Spleen (tissue), 13 donors: ENCODE measurements at regions of chr19 and their contacts with region 1.

Region 1: GRCh38 chr19:5031231-5032100 is 62.6 kb downstream of the KDM4B start:
- DNase-seq: peak; percentile 94
- H3K4me3 ChIP-seq: no peak overlapping the region
- H3K27ac ChIP-seq: peak overlapping the region in 3 of 8 donors; percentile 11 to 48 (median 44)
- H3K4me1 ChIP-seq: peaks cover 8 to 85% (median 48%) of the 10 kb centered on the region in 6 donors
- H3K27me3 ChIP-seq: no peaks in the 10 kb centered on the region
- CTCF ChIP-seq: peak; percentile 88 to 99 (median 96)
- POLR2A ChIP-seq: no peak

Region 2: GRCh38 chr19:4815426-4816201 is 215.9 kb before region 1 on chr19:
- intact Hi-C with region 1: loop called (anchors 5 kb)
- DNase-seq: peak; percentile 91
- H3K4me3 ChIP-seq: peak overlapping the region in 6 of 8 donors; percentile 14 to 58 (median 25)
- H3K27ac ChIP-seq: peak overlapping the region in 5 of 8 donors; percentile 44 to 67 (median 61)
- H3K4me1 ChIP-seq: peaks cover 5 to 52% (median 23%) of the 10 kb centered on the region in 6 donors
- H3K27me3 ChIP-seq: no peaks in the 10 kb centered on the region
- CTCF ChIP-seq: peak in 1 of 11 experiments; percentile 7
- POLR2A ChIP-seq: no peak

Region 3: DNA sequence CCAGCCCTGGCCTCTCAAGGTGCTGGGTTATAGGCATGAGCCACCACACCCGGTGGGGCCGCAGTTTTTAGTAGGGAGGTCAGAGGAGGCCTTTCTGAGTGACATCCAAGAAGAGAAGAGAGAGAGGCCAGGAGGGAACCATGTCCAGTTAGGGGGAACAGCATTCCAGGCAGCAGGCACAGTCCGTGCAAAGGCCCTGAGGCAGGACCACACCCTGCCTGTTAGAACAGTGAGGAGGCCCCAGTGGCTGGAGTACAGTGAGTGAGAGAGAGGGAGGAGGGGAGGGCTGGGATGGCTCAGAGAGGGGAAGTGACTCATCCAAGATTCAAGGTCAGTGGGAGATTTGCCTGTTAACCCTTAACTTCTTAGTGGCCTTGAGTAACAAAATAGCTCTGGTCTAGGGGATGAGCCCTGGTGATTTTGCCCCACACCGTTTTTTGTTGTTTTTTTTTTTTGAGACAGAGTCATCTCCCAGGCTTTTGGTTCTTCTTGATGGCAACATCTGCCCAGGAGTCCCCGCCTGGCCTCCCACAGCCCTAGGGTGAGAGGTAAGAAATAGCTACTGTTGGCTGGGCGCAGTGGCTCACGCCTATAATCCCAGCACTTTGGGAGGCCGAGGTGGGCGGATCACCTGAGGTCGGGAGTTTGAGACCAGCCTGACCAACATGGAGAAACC is 161.3 kb before region 1 on chr19:
- intact Hi-C with region 1: loop called (anchors 5 kb)
- DNase-seq: peak; percentile 76
- H3K4me3 ChIP-seq: no peak overlapping the region
- H3K27ac ChIP-seq: peak overlapping the region in 4 of 8 donors; percentile 32 to 97 (median 48)
- H3K4me1 ChIP-seq: peaks cover 0 to 64% (median 33%) of the 10 kb centered on the region in 6 donors
- H3K27me3 ChIP-seq: no peaks in the 10 kb centered on the region
- CTCF ChIP-seq: no peak
- POLR2A ChIP-seq: no peak